B cell (primary cell): ENCODE measurements at regions of chr6 and their contacts with region 1.

Region 1: GRCh38 chr6:69758214-69758613 is 38.6 kb downstream of the LMBRD1 start:
- DNase-seq: no peak
- ATAC-seq: no peak
- H3K4me3 ChIP-seq: no peak overlapping the region
- H3K4me3 Mint-ChIP-seq: no peak overlapping the region
- H3K27ac ChIP-seq: no peak overlapping the region
- H3K27ac Mint-ChIP-seq: peak overlapping the region; percentile 51
- H3K4me1 ChIP-seq: peaks cover 7 to 8% of the 10 kb centered on the region in 2 donors
- H3K4me1 Mint-ChIP-seq: peaks cover 61% of the 10 kb centered on the region
- H3K27me3 ChIP-seq: no peaks in the 10 kb centered on the region
- H3K27me3 Mint-ChIP-seq: no peaks in the 10 kb centered on the region
- CTCF ChIP-seq: no peak

Region 2: DNA sequence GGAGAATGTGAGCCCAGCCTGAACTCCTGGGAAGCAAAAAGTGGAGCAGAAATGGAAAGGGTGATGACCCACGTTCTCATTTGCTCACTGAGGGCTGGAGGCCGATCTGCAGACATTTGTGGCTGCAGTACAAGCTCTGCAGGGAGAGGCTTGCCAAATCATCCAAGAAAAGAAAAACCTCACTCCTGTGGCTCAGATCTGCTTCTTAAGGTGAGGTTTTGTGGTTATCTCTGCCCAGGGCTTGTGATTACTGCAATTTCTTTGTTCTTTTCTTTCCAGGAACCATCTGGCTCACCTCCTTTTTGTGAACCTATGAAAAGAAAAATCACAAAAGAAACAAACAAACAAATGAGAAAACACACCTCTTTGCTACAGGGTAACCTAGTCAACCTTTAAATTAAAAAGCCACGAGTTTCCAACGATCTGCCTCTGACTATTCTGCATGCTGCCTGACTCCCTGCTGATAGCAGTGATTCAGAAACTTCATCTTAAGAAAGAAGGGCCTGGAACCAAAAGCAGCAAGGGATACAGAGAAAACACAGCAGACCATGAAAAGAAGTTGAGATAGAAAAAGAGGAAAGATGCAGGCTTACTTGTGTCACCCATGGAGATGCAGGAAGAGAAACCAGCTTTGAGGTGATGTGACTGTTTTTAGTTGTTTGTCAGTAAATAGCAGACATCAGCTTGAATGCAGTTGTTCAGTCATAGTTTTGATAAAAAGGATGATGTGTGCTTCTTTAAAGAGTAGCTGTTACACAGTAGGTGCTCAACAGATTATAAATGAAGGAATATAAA is 126.5 kb before region 1 on chr6:
- CTCF ChIA-PET with region 1: no interaction called
- POLR2A ChIA-PET with region 1: no interaction called
- intact Hi-C with region 1: no loop called
- DNase-seq: no peak
- ATAC-seq: no peak
- H3K4me3 ChIP-seq: no peak overlapping the region
- H3K4me3 Mint-ChIP-seq: no peak overlapping the region
- H3K27ac ChIP-seq: no peak overlapping the region
- H3K27ac Mint-ChIP-seq: no peak overlapping the region
- H3K4me1 ChIP-seq: no peaks in the 10 kb centered on the region
- H3K4me1 Mint-ChIP-seq: peaks cover 1% of the 10 kb centered on the region
- H3K27me3 ChIP-seq: no peaks in the 10 kb centered on the region
- H3K27me3 Mint-ChIP-seq: peaks cover 14% of the 10 kb centered on the region
- CTCF ChIP-seq: no peak

Region 3: DNA sequence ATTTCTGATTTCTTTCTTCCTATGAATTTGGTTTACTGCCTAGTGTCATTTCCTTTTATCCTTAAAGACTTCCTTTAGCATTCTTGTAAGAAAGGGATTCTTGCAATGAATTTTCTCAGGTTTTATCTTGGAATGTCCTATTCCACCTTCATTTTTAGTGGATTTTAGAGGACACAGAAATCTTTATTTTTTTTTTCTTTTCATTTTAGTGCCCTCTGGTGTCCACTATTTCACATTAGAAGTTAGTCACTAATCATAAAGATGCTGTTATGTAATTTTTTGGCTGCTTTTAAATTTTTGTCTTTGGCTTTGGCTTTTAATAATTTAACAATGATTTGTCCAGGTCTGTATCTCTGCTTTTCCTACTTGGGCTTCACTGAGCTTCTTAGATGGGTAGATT is 10.4 kb after region 1 on chr6:
- CTCF ChIA-PET with region 1: no interaction called
- POLR2A ChIA-PET with region 1: no interaction called
- intact Hi-C with region 1: loop called (anchors 2 kb)
- DNase-seq: no peak
- ATAC-seq: no peak
- H3K4me3 ChIP-seq: no peak overlapping the region
- H3K4me3 Mint-ChIP-seq: no peak overlapping the region
- H3K27ac ChIP-seq: peak overlapping the region in 1 of 2 donors; percentile 40
- H3K27ac Mint-ChIP-seq: peak overlapping the region; percentile 33
- H3K4me1 ChIP-seq: peaks cover 0 to 6% of the 10 kb centered on the region in 2 donors
- H3K4me1 Mint-ChIP-seq: peaks cover 51% of the 10 kb centered on the region
- H3K27me3 ChIP-seq: no peaks in the 10 kb centered on the region
- H3K27me3 Mint-ChIP-seq: no peaks in the 10 kb centered on the region
- CTCF ChIP-seq: no peak

Region 4: GRCh38 chr6:69866770-69867638 is 108.8 kb after region 1 on chr6:
- CTCF ChIA-PET with region 1: no interaction called
- POLR2A ChIA-PET with region 1: no interaction called
- intact Hi-C with region 1: no loop called
- DNase-seq: peak; percentile 92
- ATAC-seq: peak; percentile 78
- H3K4me3 ChIP-seq: peak overlapping the region; percentile 52 to 88 (median 78)
- H3K4me3 Mint-ChIP-seq: peak overlapping the region; percentile 93
- H3K27ac ChIP-seq: peak overlapping the region; percentile 91 to 96
- H3K27ac Mint-ChIP-seq: peak overlapping the region; percentile 95
- H3K4me1 ChIP-seq: peaks cover 36 to 55% of the 10 kb centered on the region in 2 donors
- H3K4me1 Mint-ChIP-seq: peaks cover 65% of the 10 kb centered on the region
- H3K27me3 ChIP-seq: no peaks in the 10 kb centered on the region
- H3K27me3 Mint-ChIP-seq: no peaks in the 10 kb centered on the region
- CTCF ChIP-seq: peak; percentile 65

Region 5: GRCh38 chr6:69881322-69882151 is 123.3 kb after region 1 on chr6:
- CTCF ChIA-PET with region 1: no interaction called
- POLR2A ChIA-PET with region 1: no interaction called
- intact Hi-C with region 1: no loop called
- DNase-seq: peak; percentile 88
- ATAC-seq: peak; percentile 87
- H3K4me3 ChIP-seq: peak overlapping the region; percentile 9 to 67 (median 28)
- H3K4me3 Mint-ChIP-seq: peak overlapping the region; percentile 84
- H3K27ac ChIP-seq: peak overlapping the region; percentile 99 to 100
- H3K27ac Mint-ChIP-seq: peak overlapping the region; percentile 95
- H3K4me1 ChIP-seq: peaks cover 56 to 81% of the 10 kb centered on the region in 2 donors
- H3K4me1 Mint-ChIP-seq: peaks cover 69% of the 10 kb centered on the region
- H3K27me3 ChIP-seq: no peaks in the 10 kb centered on the region
- H3K27me3 Mint-ChIP-seq: no peaks in the 10 kb centered on the region
- CTCF ChIP-seq: no peak